ENCODE measurements at regions of chr4 and their contacts with region 1.

Region 1: GRCh38 chr4:139030614-139031235 is 15.1 kb downstream of the NOCT start:
- DNase-seq: peak; percentile 83
- ATAC-seq: peak; percentile 76
- H3K4me3 Mint-ChIP-seq: no peak overlapping the region
- H3K27ac Mint-ChIP-seq: peak overlapping the region; percentile 3
- H3K4me1 Mint-ChIP-seq: peaks cover 8% of the 10 kb centered on the region
- H3K27me3 Mint-ChIP-seq: no peaks in the 10 kb centered on the region

Region 2: DNA sequence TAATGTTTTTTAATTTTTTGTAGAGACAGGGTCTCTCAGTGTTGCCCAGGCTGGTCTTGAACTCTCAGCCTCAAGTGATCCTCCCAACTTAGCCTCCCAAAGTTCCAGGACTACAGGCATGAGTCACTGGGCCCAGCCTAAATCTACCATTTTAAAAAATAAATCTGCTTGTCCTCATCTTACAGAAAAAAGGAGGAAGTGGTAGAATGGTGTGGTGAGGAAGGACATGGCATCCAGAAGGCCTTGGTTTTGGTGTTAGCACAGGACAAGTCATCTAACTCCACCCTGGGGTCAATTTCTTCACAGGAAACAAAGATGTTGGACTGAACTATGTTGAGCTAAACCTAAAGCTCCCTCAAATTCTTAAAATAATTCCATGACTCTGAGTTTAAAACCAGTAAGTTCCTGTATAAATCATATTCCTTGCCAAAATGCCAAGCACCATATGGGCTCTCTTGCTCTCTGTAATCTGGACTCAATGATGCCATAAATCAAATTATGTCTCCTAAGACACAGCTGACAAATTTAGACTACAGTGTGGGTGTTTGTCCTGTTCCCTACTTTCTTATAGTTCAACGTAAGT is 269.0 kb before region 1 on chr4:
- CTCF ChIA-PET with region 1: no interaction called
- POLR2A ChIA-PET with region 1: no interaction called
- intact Hi-C with region 1: no loop called
- DNase-seq: no peak
- ATAC-seq: no peak
- H3K4me3 Mint-ChIP-seq: no peak overlapping the region
- H3K27ac Mint-ChIP-seq: no peak overlapping the region
- H3K4me1 Mint-ChIP-seq: no peaks in the 10 kb centered on the region
- H3K27me3 Mint-ChIP-seq: peaks cover 2% of the 10 kb centered on the region

Region 3: DNA sequence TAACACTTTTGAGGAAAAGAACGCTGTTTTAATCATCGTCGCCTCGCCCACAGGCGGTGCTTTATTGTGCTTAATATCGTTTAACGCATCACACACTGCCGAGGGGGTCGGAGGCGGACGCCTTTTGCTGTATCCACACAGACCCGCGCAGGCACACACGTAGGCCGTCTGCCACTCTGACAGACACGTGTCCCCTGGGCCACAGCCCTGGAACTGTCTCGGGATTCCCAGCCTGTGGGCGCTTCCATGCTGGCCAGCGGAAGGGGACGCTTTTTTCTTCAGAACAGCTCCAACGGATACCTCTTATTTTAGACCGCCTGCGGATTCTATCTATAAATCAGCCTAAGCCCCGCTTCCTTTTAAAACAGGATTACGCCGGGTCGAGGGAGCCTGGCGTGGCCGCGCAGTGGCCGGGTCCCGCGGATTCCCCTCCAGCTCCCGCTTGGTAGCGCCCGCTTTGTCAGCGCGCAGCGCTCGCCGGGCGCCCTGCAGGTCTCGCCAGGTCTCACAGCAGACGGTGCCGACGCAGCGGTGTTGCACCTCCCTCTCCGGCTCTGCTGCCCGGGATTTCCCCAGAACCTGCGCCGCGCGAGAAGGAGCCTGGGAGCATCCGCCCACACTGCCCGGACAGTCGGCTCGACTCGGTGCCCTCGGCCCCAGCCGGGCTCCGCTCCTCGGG is 15.3 kb before region 1 on chr4 and contains the start of gene NOCT:
- CTCF ChIA-PET with region 1: interaction called, 45 read pairs
- POLR2A ChIA-PET with region 1: interaction called, 5 read pairs
- intact Hi-C with region 1: no loop called
- DNase-seq: peak; percentile 98
- ATAC-seq: peak; percentile 92
- H3K4me3 Mint-ChIP-seq: peak within 1 kb of the TSS; percentile 90
- H3K27ac Mint-ChIP-seq: peak within 1 kb of the TSS; percentile 96
- H3K4me1 Mint-ChIP-seq: peaks cover 41% of the 10 kb centered on the region
- H3K27me3 Mint-ChIP-seq: no peaks in the 10 kb centered on the region
- total RNA-seq, gene NOCT: 16.5 to 20.5 TPM

Region 4: DNA sequence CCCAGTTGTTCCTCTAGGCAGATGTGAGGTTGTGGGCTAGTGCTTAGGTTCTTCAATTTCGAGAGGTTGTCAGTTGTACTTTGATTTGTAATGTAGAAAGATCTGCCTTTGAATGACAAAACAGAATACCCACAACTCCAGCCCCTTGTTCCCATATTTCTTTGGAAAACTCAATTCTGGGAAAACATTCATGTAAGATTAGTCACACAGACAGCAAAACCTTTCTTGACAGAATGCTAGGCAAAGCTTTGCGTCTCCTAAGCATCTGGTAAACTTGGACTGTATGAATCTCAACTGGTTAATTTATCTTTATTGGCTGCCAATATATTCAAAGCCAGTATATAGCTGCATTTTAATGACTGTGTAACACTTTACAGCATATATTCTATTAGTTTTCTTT is 19.7 kb after region 1 on chr4:
- CTCF ChIA-PET with region 1: interaction called, 12 read pairs
- POLR2A ChIA-PET with region 1: no interaction called
- intact Hi-C with region 1: no loop called
- DNase-seq: no peak
- ATAC-seq: no peak
- H3K4me3 Mint-ChIP-seq: no peak overlapping the region
- H3K27ac Mint-ChIP-seq: no peak overlapping the region
- H3K4me1 Mint-ChIP-seq: peaks cover 4% of the 10 kb centered on the region
- H3K27me3 Mint-ChIP-seq: no peaks in the 10 kb centered on the region

Region 5: DNA sequence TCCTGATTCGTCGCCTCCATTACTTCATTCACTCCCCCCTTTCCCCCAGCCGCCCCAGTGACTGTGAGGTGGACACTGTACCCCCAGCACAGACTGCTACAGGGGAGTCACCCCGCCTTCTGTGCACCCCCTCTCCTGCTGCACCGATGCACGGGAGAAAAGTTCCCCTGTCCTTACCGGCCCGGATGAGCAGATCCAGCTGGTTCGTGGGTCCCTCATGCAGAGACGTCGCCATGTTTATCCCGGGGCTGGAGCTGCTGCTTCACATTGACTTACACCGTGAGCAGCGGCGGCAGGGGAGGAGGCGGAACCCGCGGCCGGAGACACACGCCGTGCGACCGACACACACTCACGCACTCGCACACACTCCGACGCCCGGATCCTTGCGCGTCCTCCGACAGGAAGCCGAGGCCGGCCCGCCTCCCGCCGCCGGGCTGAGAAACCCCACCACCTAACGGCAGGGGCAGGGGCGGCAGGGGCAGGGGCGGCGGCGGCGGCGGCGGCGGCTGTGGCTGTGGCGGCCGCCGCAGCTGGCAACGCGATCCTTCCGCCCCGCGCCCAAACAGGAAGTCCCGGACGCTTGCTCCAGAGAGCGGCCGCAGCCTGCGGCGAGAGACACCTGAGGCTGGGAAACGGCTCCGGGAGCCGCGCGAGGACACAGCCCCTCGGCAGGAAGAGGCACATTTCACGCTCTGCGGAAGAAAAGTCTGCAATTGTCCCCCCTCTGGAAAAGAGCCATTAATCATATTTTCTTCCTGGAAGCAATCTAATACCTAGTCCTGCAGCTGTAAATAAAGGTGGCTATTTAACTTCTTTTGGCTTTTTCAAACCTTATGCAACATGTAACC is 53.5 kb after region 1 on chr4:
- CTCF ChIA-PET with region 1: interaction called, 28 read pairs
- POLR2A ChIA-PET with region 1: interaction called, 4 read pairs
- intact Hi-C with region 1: loop called (anchors 1 to 2 kb)
- DNase-seq: peak; percentile 92
- ATAC-seq: peak; percentile 64
- H3K4me3 Mint-ChIP-seq: peak overlapping the region; percentile 100
- H3K27ac Mint-ChIP-seq: peak overlapping the region; percentile 99
- H3K4me1 Mint-ChIP-seq: peaks cover 30% of the 10 kb centered on the region
- H3K27me3 Mint-ChIP-seq: no peaks in the 10 kb centered on the region

Region 6: DNA sequence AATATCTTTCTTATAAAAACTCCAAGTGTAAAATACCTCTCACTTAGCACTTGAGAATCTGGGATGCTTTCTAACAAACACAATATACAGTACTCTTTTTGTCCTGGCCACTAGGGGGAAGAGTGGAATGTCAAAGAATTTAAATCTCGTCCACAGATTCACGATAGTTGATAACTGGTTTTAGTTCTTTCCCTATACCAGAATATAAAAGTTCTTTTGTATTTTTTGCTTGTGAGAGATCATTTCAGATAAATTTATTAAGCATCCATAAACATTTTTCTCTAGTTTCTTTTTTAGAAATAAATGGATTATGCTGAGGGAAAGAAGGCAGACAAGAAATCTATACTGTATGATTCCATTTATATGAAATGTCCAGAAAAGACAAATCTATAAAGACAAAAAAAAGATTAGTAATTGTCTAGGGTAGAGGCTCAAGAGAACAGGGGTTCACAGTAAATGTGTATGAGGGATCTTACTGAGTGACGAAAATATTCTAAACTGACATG is 198.9 kb after region 1 on chr4:
- CTCF ChIA-PET with region 1: interaction called, 12 read pairs
- POLR2A ChIA-PET with region 1: no interaction called
- intact Hi-C with region 1: loop called in 1 of 2 experiments (anchors 2 kb)
- DNase-seq: no peak
- ATAC-seq: peak; percentile 66
- H3K4me3 Mint-ChIP-seq: no peak overlapping the region
- H3K27ac Mint-ChIP-seq: no peak overlapping the region
- H3K4me1 Mint-ChIP-seq: peaks cover 1% of the 10 kb centered on the region
- H3K27me3 Mint-ChIP-seq: no peaks in the 10 kb centered on the region

Region 7: GRCh38 chr4:139515531-139515958 is 484.8 kb after region 1 on chr4:
- CTCF ChIA-PET with region 1: no interaction called
- POLR2A ChIA-PET with region 1: no interaction called
- intact Hi-C with region 1: no loop called
- DNase-seq: no peak
- ATAC-seq: no peak
- H3K4me3 Mint-ChIP-seq: no peak overlapping the region
- H3K27ac Mint-ChIP-seq: no peak overlapping the region
- H3K4me1 Mint-ChIP-seq: no peaks in the 10 kb centered on the region
- H3K27me3 Mint-ChIP-seq: no peaks in the 10 kb centered on the region

Region 8: GRCh38 chr4:139530833-139531427 is 500.2 kb after region 1 on chr4:
- CTCF ChIA-PET with region 1: interaction called, 4 read pairs
- POLR2A ChIA-PET with region 1: no interaction called
- intact Hi-C with region 1: loop called in 1 of 2 experiments (anchors 2 kb)
- DNase-seq: peak; percentile 71
- ATAC-seq: peak; percentile 68
- H3K4me3 Mint-ChIP-seq: no peak overlapping the region
- H3K27ac Mint-ChIP-seq: no peak overlapping the region
- H3K4me1 Mint-ChIP-seq: no peaks in the 10 kb centered on the region
- H3K27me3 Mint-ChIP-seq: no peaks in the 10 kb centered on the region